Ovary (tissue), 10 donors: ENCODE measurements at regions of chr1 and their contacts with region 1.

Region 1: DNA sequence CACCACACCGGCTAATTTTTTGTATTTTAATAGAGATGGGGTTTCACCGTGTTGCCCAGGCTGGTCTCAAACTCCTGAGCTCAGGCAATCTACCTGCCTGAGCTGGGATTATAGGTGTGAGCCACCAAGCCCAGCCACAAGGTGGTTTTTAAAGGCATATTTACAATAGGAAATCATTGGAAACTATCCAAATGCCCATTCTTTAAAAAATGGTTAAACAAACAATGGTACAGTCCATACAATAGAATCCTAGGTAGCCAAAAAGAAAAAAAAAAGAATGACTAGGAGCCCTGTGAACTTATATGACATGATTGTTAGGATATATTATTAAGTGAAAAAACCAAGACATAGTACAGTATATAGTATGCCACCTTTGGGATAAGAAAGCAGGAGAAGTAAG is 5.3 kb downstream of the ATP2B4 start:
- DNase-seq: no peak
- H3K4me3 ChIP-seq: no peak overlapping the region
- H3K27ac ChIP-seq: peak overlapping the region; percentile 7 to 48
- H3K4me1 ChIP-seq: peaks cover 13% of the 10 kb centered on the region
- H3K27me3 ChIP-seq: no peaks in the 10 kb centered on the region
- CTCF ChIP-seq: no peak
- EP300 ChIP-seq: no peak
- POLR2A ChIP-seq: no peak

Region 2: DNA sequence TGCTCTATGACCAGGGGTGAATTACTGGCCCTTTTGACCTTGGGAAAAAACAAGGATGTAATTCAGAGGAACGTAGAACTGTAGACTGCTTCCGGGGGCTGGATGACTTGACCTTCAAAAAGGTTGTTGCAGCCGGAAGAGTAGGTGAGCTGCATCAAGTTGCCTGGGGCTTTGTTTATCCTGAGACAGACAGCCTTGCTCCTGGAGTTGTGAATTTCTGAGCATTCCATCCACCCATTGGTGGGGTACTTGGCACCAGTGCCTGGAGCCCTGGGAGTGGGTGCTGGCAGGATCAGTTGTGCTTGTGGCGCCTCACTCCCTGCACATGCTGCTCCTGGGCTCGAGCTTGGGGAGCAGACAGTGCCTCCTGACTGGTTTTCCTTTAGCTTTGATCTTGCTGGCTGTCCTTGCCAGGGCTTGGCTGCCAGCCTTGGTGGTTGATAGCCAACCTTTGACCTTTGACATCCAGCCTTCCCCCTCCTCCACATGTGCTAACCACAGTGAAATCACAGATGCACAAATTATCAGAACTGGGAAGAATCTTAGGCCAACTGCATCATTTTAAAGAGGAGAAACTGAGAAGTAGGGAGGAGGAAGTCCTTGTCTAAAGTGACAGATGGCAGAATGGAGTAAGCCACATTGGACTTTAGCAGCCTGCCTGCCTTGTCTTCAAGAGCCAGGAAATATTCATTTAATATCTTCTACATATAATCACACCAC is 529.9 kb before region 1 on chr1:
- intact Hi-C with region 1: no loop called
- DNase-seq: no peak
- H3K4me3 ChIP-seq: no peak overlapping the region
- H3K27ac ChIP-seq: no peak overlapping the region
- H3K4me1 ChIP-seq: no peaks in the 10 kb centered on the region
- H3K27me3 ChIP-seq: no peaks in the 10 kb centered on the region
- CTCF ChIP-seq: no peak
- EP300 ChIP-seq: no peak
- POLR2A ChIP-seq: no peak

Region 3: GRCh38 chr1:203663294-203663693 is 31.3 kb after region 1 on chr1:
- intact Hi-C with region 1: loop called in 1 of 4 experiments (anchors 1 kb)
- DNase-seq: no peak
- H3K4me3 ChIP-seq: no peak overlapping the region
- H3K27ac ChIP-seq: no peak overlapping the region
- H3K4me1 ChIP-seq: peaks cover 24% of the 10 kb centered on the region
- H3K27me3 ChIP-seq: no peaks in the 10 kb centered on the region
- CTCF ChIP-seq: no peak
- EP300 ChIP-seq: no peak
- POLR2A ChIP-seq: no peak

Region 4: DNA sequence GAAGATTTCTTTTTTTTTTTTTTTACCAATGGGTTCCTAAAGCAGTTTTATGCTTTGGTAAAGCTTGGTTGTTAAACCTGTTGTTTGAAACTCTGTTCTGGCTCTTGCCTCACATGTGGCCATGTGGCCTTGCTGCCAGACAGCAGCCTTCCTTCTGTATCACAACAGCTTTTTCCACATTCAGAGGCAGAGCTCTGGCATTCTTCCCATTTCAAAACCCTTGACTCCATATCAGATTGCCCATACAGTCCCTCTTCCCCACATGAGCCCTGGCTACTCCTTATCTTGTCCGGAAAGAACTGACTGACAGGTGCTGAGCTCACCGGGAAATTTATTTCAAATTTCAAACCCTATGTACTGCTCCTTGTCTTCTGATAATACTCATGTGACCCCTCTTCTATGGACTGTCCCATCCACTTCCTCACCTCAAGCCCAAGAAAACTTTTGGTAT is 94.5 kb after region 1 on chr1:
- intact Hi-C with region 1: no loop called
- DNase-seq: no peak
- H3K4me3 ChIP-seq: no peak overlapping the region
- H3K27ac ChIP-seq: no peak overlapping the region
- H3K4me1 ChIP-seq: no peaks in the 10 kb centered on the region
- H3K27me3 ChIP-seq: no peaks in the 10 kb centered on the region
- CTCF ChIP-seq: no peak
- EP300 ChIP-seq: no peak
- POLR2A ChIP-seq: no peak

Region 5: GRCh38 chr1:204257954-204258752 is 626.2 kb after region 1 on chr1:
- intact Hi-C with region 1: no loop called
- DNase-seq: peak; percentile 57 to 75 (median 69)
- H3K4me3 ChIP-seq: no peak overlapping the region
- H3K27ac ChIP-seq: no peak overlapping the region
- H3K4me1 ChIP-seq: no peaks in the 10 kb centered on the region
- H3K27me3 ChIP-seq: no peaks in the 10 kb centered on the region
- CTCF ChIP-seq: peak; percentile 44 to 64 (median 46)
- EP300 ChIP-seq: no peak
- POLR2A ChIP-seq: no peak